Activated CD4-positive, alpha-beta memory T cell treated with anti-CD3 and anti-CD28 coated beads, Interleukin-2, amount 10 ng/mL, durations not matched to agents 7 days and 5 days (primary cell): ENCODE measurements at regions of chr7 and their contacts with region 1.

Region 1: DNA sequence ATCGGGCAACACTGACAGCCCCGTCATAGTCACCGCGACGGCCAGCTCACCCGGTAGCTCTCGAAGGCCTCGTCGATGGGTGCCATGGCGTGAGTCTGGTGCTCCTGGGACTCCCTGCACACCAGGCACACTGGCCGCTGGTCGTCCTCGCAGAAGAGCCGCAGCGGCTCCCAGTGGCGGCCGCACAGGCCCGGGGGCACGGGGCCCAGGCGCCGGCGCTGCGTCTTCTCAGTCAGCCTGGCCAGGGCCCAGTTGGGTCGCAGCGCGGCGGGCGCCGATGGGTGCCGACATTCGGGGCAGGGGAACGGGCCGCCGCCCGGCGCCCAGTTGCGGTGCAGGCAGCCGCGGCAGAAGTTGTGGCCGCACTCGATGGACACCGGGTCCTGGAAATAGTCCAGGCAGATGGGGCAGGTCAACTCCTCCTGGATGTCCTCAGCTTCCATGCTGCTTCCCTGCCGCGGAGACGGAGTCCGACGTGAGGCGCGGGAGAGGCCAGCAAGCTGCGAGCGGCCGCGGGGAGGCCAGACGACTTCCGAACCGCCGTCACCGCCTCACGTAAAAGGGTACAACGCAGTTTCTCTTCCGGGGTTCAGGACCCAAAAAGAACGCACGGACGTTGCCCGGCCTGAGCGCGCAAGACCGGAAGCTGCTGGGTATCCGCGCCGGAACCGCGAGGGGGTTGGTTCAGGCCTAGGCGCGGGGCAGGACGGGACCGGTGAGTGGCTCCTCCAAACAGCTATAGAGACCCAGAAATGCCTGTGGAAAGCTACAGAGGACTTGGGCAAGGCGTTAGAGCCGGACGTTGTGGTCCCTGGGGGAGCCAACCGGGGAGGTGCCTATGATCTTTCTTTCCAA is at the start of gene TRIM4:
- DNase-seq: peak; percentile 93
- H3K4me3 Mint-ChIP-seq: peak within 1 kb of the TSS; percentile 96
- H3K27ac Mint-ChIP-seq: peak within 1 kb of the TSS; percentile 96
- H3K4me1 Mint-ChIP-seq: peaks cover 53% of the 10 kb centered on the region
- H3K27me3 Mint-ChIP-seq: no peaks in the 10 kb centered on the region
- total RNA-seq, gene TRIM4: 28.9 to 29.5 TPM

Region 2: GRCh38 chr7:99719996-99720769 is 199.0 kb before region 1 on chr7:
- CTCF ChIA-PET with region 1: no interaction called
- POLR2A ChIA-PET with region 1: no interaction called
- DNase-seq: no peak
- H3K4me3 Mint-ChIP-seq: no peak overlapping the region
- H3K27ac Mint-ChIP-seq: no peak overlapping the region
- H3K4me1 Mint-ChIP-seq: no peaks in the 10 kb centered on the region
- H3K27me3 Mint-ChIP-seq: no peaks in the 10 kb centered on the region

Region 3: GRCh38 chr7:99898831-99899230 is 20.4 kb before region 1 on chr7:
- CTCF ChIA-PET with region 1: interaction called, 33 read pairs
- POLR2A ChIA-PET with region 1: no interaction called
- DNase-seq: no peak
- H3K4me3 Mint-ChIP-seq: no peak overlapping the region
- H3K27ac Mint-ChIP-seq: no peak overlapping the region
- H3K4me1 Mint-ChIP-seq: peaks cover 12% of the 10 kb centered on the region
- H3K27me3 Mint-ChIP-seq: no peaks in the 10 kb centered on the region

Region 4: GRCh38 chr7:100049441-100050311 is 130.5 kb after region 1 on chr7 and contains the start of gene ZSCAN21:
- CTCF ChIA-PET with region 1: interaction called, 7 read pairs
- POLR2A ChIA-PET with region 1: interaction called, 10 read pairs
- DNase-seq: peak; percentile 81
- H3K4me3 Mint-ChIP-seq: peak within 1 kb of the TSS; percentile 85
- H3K27ac Mint-ChIP-seq: peak within 1 kb of the TSS; percentile 80
- H3K4me1 Mint-ChIP-seq: peaks cover 17% of the 10 kb centered on the region
- H3K27me3 Mint-ChIP-seq: peaks cover 3% of the 10 kb centered on the region
- total RNA-seq, gene ZSCAN21: 6.9 TPM